ENCODE measurements at regions of chr14 and their contacts with region 1.

Region 1: DNA sequence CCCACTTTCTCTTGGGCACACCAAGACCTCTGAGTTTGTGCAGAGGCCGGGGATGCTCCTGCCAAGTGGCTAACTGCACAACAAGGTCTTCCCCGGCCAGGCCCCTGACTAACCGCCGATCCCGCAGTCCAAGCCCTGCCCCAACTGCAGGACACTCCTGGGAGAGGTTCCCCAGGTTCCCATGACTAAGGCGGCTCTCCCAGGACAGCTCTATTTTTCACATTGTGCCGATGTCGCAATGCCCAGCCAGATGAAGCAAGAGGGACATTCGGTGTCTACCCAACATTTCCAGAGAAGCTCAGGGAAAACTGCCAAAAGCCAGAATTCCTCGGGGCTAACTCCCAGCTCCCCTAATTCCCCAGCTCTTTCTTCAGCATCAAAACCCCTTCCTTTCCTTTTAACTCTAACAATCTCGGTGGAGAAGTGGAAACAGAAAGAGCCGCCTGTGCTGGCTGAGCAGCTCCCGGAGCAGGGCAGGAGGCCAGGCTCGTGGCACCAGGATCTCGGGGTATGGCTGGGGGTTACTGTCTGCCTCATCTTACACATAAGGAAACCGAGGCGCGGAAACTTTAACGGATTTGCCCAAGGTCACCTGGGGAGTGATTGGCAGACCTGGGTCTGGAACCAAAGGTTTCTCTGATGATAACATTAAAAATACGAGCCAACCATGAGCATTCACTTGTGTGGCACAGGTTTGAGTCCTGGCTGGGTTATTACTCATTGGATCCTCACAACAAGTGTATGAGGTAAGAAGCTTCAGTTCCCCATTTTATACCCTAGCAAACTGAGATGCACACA is 318.2 kb downstream of the BCL11B start:
- DNase-seq: no peak
- ATAC-seq: no peak
- H3K4me3 Mint-ChIP-seq: no peak overlapping the region
- H3K27ac Mint-ChIP-seq: no peak overlapping the region
- H3K4me1 Mint-ChIP-seq: peaks cover 11% of the 10 kb centered on the region
- H3K27me3 Mint-ChIP-seq: no peaks in the 10 kb centered on the region

Region 2: GRCh38 chr14:98885038-98885437 is 68.7 kb before region 1 on chr14:
- CTCF ChIA-PET with region 1: interaction called, 3 read pairs
- POLR2A ChIA-PET with region 1: no interaction called
- intact Hi-C with region 1: loop called in 1 of 2 experiments (anchors 2 kb)
- DNase-seq: no peak
- ATAC-seq: no peak
- H3K4me3 Mint-ChIP-seq: no peak overlapping the region
- H3K27ac Mint-ChIP-seq: no peak overlapping the region
- H3K4me1 Mint-ChIP-seq: peaks cover 13% of the 10 kb centered on the region
- H3K27me3 Mint-ChIP-seq: no peaks in the 10 kb centered on the region